ENCODE measurements at regions of chr6 and their contacts with region 1.

Region 1: DNA sequence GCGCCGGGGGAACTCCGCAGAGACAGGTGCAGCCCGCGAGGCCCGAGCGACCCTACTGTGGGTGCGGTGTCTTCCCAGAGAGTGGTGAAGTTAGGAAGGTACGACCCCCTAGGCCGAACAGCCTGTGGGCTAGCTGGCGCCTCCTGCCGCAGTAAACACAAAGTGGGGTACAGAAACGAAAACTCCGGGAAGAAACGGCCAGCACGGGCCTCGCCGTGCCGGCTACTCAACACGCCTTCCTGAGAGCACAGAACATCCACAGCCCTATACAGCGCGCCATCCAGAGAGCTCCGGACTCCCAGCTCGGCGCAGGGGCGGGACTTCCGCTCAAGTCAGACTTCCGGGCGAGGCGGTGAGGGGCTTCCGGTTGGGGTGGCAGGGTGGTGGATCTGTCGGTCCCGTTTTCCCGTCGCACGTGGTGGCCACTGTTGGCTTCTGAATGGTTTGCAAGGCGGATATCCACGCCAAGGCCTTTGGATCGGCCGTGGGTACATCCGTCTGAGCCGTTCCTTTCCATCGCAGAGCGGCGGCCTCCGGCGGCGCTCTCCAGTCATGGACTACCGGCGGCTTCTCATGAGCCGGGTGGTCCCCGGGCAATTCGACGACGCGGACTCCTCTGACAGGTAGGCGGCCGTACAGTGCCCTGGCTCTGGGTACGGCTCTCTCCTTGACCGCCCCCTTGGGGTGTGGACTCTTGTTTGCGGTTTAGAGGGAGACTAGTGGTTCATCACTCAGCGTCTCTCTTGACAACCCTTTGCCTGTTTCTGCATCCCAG is at the starts of genes CAGE1 and RIOK1:
- DNase-seq: peak; percentile 98
- H3K4me3 Mint-ChIP-seq: peak within 1 kb of the TSS; percentile 77
- H3K27ac Mint-ChIP-seq: peak within 1 kb of the TSS; percentile 87
- H3K4me1 Mint-ChIP-seq: peaks cover 38% of the 10 kb centered on the region
- H3K27me3 Mint-ChIP-seq: no peaks in the 10 kb centered on the region
- CTCF ChIP-seq: no peak
- total RNA-seq, gene CAGE1: 0.33 and 0.47 TPM in 2 replicates
- total RNA-seq, gene RIOK1: 34.2 and 40.9 TPM in 2 replicates

Region 2: GRCh38 chr6:6319952-6320811 is 1069.5 kb before region 1 on chr6 and contains the start of gene F13A1:
- CTCF ChIA-PET with region 1: no interaction called
- POLR2A ChIA-PET with region 1: no interaction called
- intact Hi-C with region 1: no loop called
- DNase-seq: no peak
- H3K4me3 Mint-ChIP-seq: no peak within 1 kb of the TSS
- H3K27ac Mint-ChIP-seq: no peak within 1 kb of the TSS
- H3K4me1 Mint-ChIP-seq: no peaks in the 10 kb centered on the region
- H3K27me3 Mint-ChIP-seq: peaks cover 40% of the 10 kb centered on the region
- CTCF ChIP-seq: no peak
- total RNA-seq, gene F13A1: 0.65 and 0.93 TPM in 2 replicates

Region 3: DNA sequence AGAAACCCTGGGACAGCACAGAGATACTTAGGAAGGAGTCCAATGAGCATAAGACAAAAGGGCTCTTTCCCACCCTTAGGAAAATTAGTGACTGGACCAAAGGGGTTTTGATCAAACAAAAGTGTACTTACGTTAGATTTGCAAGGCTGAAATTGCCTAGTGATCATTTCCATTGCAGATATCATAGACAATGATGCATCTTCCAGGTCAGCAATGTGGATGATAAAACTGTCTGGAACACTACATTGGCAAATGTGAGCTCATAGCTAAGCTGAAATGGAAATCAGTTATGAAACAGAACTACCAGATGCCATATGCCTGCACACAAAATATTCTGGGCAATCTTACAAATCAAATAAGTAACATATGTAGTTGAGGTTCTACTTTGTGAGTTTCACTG is 767.1 kb before region 1 on chr6:
- CTCF ChIA-PET with region 1: no interaction called
- POLR2A ChIA-PET with region 1: no interaction called
- intact Hi-C with region 1: no loop called
- DNase-seq: no peak
- H3K4me3 Mint-ChIP-seq: no peak overlapping the region
- H3K27ac Mint-ChIP-seq: no peak overlapping the region
- H3K4me1 Mint-ChIP-seq: peaks cover 5% of the 10 kb centered on the region
- H3K27me3 Mint-ChIP-seq: peaks cover 45% of the 10 kb centered on the region
- CTCF ChIP-seq: no peak

Region 4: GRCh38 chr6:6676910-6677441 is 712.7 kb before region 1 on chr6:
- CTCF ChIA-PET with region 1: no interaction called
- POLR2A ChIA-PET with region 1: no interaction called
- intact Hi-C with region 1: loop called (anchors 10 kb)
- DNase-seq: peak; percentile 88
- H3K4me3 Mint-ChIP-seq: no peak overlapping the region
- H3K27ac Mint-ChIP-seq: no peak overlapping the region
- H3K4me1 Mint-ChIP-seq: peaks cover 23% of the 10 kb centered on the region
- H3K27me3 Mint-ChIP-seq: no peaks in the 10 kb centered on the region
- CTCF ChIP-seq: peak; percentile 92

Region 5: GRCh38 chr6:6803572-6803971 is 586.1 kb before region 1 on chr6:
- CTCF ChIA-PET with region 1: no interaction called
- POLR2A ChIA-PET with region 1: no interaction called
- intact Hi-C with region 1: no loop called
- DNase-seq: peak; percentile 98
- H3K4me3 Mint-ChIP-seq: peak overlapping the region; percentile 27
- H3K27ac Mint-ChIP-seq: peak overlapping the region; percentile 84
- H3K4me1 Mint-ChIP-seq: peaks cover 39% of the 10 kb centered on the region
- H3K27me3 Mint-ChIP-seq: no peaks in the 10 kb centered on the region
- CTCF ChIP-seq: no peak

Region 6: GRCh38 chr6:7300926-7301325 is 88.7 kb before region 1 on chr6:
- CTCF ChIA-PET with region 1: interaction called, 8 read pairs
- POLR2A ChIA-PET with region 1: interaction called, 10 read pairs
- intact Hi-C with region 1: no loop called
- DNase-seq: no peak
- H3K4me3 Mint-ChIP-seq: no peak overlapping the region
- H3K27ac Mint-ChIP-seq: peak overlapping the region; percentile 29
- H3K4me1 Mint-ChIP-seq: peaks cover 11% of the 10 kb centered on the region
- H3K27me3 Mint-ChIP-seq: no peaks in the 10 kb centered on the region
- CTCF ChIP-seq: no peak

Region 7: DNA sequence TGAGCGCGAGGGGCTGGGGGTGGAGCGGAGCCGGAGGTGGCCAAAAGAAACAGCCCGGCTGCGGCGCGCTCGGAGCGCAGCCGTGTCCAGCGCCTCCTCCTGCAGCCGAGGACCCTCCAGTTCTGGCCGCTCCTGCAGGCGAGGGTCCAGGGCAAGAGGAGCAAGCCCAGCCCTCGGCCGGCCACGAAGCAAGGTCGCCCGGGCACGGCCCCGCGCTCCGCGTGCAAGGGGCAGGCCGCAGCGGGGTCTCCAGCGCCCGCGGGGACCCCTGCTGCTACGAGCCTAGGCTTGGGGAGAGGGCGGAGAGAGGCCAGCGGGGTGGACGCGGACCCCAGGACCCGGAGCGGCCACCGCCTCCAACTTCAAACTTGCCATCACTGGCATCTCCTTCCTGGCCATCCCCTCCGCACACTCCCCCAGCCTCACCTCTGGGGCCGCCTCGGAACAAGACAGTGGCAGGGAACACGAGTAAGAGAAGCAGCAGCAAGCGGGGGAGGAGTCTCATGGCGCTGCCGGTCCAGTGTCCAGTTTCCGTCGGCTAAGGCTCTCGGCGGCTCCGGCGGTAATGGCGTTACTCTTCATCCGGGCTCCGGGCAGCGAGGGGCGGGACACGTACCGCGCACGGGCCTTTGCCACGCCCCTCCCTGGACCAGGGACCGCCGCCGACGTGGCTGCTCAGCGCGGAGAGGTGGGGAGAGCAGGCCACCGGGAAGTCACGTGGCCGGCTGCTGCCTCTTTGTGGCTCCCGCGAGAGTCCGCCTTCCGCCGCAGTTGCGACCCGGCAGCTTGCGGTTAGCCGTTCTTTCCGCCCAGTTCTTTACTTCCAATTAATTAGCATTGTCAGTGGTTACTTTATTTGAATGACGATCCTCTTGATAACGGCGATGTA is 76.8 kb before region 1 on chr6 and contains the start of gene SSR1:
- CTCF ChIA-PET with region 1: interaction called, 14 read pairs
- POLR2A ChIA-PET with region 1: interaction called, 114 read pairs
- intact Hi-C with region 1: loop called (anchors 1 kb)
- DNase-seq: peak; percentile 96
- H3K4me3 Mint-ChIP-seq: peak within 1 kb of the TSS; percentile 91
- H3K27ac Mint-ChIP-seq: peak within 1 kb of the TSS; percentile 83
- H3K4me1 Mint-ChIP-seq: peaks cover 16% of the 10 kb centered on the region
- H3K27me3 Mint-ChIP-seq: no peaks in the 10 kb centered on the region
- CTCF ChIP-seq: no peak
- total RNA-seq, gene SSR1: 318 and 396 TPM in 2 replicates

Region 8: GRCh38 chr6:7367408-7367807 is 22.2 kb before region 1 on chr6:
- CTCF ChIA-PET with region 1: interaction called, 3 read pairs
- POLR2A ChIA-PET with region 1: interaction called, 10 read pairs
- intact Hi-C with region 1: no loop called
- DNase-seq: no peak
- H3K4me3 Mint-ChIP-seq: no peak overlapping the region
- H3K27ac Mint-ChIP-seq: no peak overlapping the region
- H3K4me1 Mint-ChIP-seq: no peaks in the 10 kb centered on the region
- H3K27me3 Mint-ChIP-seq: no peaks in the 10 kb centered on the region
- CTCF ChIP-seq: no peak

Region 9: DNA sequence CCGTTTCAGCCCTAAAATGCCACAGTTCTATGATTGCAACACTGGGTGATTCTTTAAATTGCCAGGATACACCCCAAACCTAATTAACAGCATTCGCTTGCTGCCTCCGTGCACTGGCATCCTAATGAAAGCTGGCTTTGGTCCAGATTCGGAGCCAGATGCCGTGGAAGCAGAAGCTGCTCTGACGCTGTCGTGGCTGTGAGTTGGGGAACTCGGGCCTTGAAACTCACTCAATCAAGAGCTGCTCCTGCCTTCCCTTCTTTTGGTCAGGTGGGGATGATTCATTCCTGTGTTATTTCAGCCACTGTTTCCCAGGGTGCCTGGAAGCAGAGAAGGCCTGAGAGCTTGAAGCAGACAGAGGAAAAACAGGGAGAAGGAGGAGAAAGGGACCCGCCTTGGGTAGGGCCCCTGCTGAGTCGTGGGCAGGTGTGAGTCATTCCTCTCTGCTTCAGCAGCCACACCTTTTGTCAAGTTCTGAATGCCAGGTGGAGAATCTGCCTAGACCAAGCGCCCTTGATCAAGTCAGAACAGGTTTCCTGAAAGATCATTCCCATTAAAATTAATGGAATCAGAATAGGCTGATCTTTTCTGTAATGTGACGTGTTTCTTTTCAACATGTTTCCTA is 115.7 kb after region 1 on chr6:
- CTCF ChIA-PET with region 1: no interaction called
- POLR2A ChIA-PET with region 1: interaction called, 14 read pairs
- intact Hi-C with region 1: no loop called
- DNase-seq: peak; percentile 99
- H3K4me3 Mint-ChIP-seq: peak overlapping the region; percentile 33
- H3K27ac Mint-ChIP-seq: peak overlapping the region; percentile 95
- H3K4me1 Mint-ChIP-seq: peaks cover 26% of the 10 kb centered on the region
- H3K27me3 Mint-ChIP-seq: no peaks in the 10 kb centered on the region
- CTCF ChIP-seq: no peak

Region 10: DNA sequence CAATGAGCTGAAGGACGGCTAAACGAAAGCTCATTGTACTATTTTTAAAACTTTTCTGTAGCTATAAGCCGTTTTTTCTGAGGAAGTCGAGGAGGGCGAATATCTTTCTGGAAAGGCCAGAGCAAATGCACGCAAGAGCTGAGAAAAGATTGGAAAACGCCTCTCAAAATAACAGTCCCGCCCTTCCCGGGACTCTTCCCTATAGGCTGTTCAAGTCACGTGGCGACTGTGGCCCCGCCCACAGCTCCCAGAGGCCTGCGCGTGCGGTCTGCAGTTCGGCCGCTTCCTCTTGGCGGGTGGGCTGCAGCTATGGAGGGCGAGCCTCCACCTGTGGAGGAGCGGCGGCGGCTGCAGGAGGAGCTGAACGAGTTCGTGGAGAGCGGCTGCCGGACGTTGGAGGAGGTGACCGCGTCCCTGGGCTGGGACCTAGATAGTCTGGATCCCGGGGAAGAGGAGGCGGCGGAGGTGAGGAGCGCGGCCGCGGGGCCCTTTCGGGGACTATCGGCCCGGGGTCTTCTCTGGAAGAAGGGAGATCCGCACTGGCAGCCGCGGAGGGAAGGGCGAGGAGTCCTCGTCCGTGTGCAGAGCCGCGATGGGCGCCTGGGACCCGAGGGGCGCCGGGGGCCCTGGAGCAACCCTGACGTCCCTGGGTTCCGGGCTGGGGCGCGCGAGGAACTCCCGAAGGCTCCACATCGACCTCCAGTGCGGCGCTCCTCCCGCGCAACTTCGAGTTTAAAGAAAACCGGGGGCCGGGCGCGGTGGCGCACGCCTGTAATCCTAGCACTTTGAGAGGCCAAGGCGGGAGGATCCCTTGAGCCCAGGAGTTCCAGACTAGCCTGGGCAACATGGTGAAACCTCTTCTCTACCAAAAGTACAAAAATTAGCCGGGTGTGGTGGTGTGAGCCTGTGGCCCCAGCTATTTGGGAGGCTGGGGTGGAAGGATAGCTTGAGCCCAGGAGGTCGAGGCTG is 200.6 kb after region 1 on chr6 and contains the start of gene SNRNP48:
- CTCF ChIA-PET with region 1: interaction called, 5 read pairs
- POLR2A ChIA-PET with region 1: interaction called, 38 read pairs
- intact Hi-C with region 1: no loop called
- DNase-seq: peak; percentile 94
- H3K4me3 Mint-ChIP-seq: peak within 1 kb of the TSS; percentile 90
- H3K27ac Mint-ChIP-seq: peak within 1 kb of the TSS; percentile 87
- H3K4me1 Mint-ChIP-seq: peaks cover 34% of the 10 kb centered on the region
- H3K27me3 Mint-ChIP-seq: no peaks in the 10 kb centered on the region
- CTCF ChIP-seq: no peak
- total RNA-seq, gene SNRNP48: 10.2 and 11.2 TPM in 2 replicates

Region 11: DNA sequence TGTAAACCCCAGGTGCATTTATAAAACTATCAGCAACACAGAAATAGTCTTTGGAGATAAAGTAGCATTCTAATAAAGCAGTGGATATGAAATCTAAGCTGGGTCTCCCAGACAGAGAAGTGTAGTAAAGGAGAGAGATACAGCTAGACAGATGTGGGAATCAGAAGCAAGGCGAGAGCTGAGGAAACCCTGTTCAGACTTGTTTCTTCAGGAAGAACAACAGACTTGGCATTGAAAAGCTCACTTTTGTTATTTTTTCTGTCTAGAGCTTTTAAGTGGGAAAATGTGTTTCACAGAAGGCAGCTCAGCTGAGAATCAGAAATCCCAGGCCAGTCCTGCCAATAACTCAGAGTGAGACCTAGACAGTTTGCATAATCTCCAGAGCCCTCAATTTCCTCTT is 992.8 kb after region 1 on chr6:
- CTCF ChIA-PET with region 1: no interaction called
- POLR2A ChIA-PET with region 1: no interaction called
- intact Hi-C with region 1: no loop called
- DNase-seq: no peak
- H3K4me3 Mint-ChIP-seq: no peak overlapping the region
- H3K27ac Mint-ChIP-seq: no peak overlapping the region
- H3K4me1 Mint-ChIP-seq: peaks cover 14% of the 10 kb centered on the region
- H3K27me3 Mint-ChIP-seq: no peaks in the 10 kb centered on the region
- CTCF ChIP-seq: no peak

Measured in MCF 10A (cell line).